ENCODE measurements at regions of chr2 and their contacts with region 1.

Region 1: GRCh38 chr2:171598713-171599319 is 76.5 kb downstream of the CYBRD1 start:
- DNase-seq: peak in 1 of 5 donors; percentile 22
- ATAC-seq: peak; percentile 54 to 84 (median 66)
- H3K4me3 ChIP-seq: no peak overlapping the region
- H3K27ac ChIP-seq: no peak overlapping the region
- H3K4me1 ChIP-seq: peaks cover 0 to 3% (median 0%) of the 10 kb centered on the region in 12 donors
- H3K27me3 ChIP-seq: peaks cover 0 to 24% (median 0%) of the 10 kb centered on the region in 9 donors
- CTCF ChIP-seq: peak; percentile 60 to 83 (median 72)
- POLR2A ChIP-seq: no peak

Region 2: DNA sequence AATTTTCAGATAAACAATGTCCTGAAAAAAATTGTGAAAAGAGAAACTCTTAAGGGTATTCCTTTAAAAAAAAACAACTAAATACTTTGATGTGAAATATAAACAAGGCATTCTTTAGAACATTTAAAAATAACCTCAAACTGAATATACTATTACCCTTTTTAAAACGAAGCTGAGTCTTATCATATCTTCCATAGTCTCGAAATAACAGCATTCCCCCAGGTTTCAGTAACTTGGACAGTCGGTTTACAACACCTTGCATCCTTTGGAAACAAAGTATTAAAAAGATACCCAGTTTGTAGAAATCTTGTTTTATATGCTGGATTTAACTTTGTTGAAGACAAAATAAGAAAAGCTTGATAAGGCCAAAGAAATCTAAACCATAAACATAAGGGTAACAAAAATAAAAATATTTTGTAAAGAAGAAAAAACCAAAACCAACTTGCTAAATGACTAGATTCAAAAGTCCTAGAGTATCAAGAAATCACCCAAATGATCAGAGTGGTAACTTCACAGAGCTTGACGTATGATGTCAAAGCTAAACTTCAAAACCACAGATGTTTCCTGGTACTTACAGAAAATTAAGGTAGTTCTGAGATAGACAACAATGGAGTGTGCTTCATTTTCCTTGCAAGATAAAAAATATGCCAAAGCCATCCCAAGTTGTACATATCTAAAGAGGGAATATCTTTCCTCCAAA is 272.8 kb before region 1 on chr2:
- intact Hi-C with region 1: no loop called
- DNase-seq: no peak
- ATAC-seq: no peak
- H3K4me3 ChIP-seq: no peak overlapping the region
- H3K27ac ChIP-seq: peak overlapping the region in 1 of 12 donors; percentile 32
- H3K4me1 ChIP-seq: peaks cover 0 to 3% (median 0%) of the 10 kb centered on the region in 12 donors
- H3K27me3 ChIP-seq: no peaks in the 10 kb centered on the region
- CTCF ChIP-seq: no peak
- POLR2A ChIP-seq: no peak

Region 3: DNA sequence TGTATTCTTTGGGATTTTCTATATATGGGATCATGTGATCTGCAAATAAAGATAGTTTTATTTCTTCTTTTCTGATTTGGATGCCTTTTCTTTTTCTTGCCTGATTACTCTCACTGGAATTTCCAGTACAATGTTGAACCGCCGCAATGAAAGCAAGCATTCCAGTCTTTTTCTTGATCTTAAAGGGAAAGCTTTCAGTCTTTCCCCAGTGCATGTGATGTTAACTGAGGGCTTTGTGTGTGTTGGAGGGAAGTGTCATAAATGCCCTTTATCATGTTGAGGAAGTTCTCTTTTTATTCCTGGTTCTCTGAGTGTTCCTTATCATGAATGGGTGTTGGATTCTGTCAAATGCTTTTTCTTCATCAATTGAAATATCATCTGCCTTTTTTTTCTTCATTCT is 93.4 kb before region 1 on chr2:
- intact Hi-C with region 1: no loop called
- DNase-seq: no peak
- ATAC-seq: no peak
- H3K4me3 ChIP-seq: no peak overlapping the region
- H3K27ac ChIP-seq: no peak overlapping the region
- H3K4me1 ChIP-seq: no peaks in the 10 kb centered on the region
- H3K27me3 ChIP-seq: no peaks in the 10 kb centered on the region
- CTCF ChIP-seq: no peak
- POLR2A ChIP-seq: no peak

Region 4: GRCh38 chr2:171723724-171724683 is 125.2 kb after region 1 on chr2:
- intact Hi-C with region 1: no loop called
- DNase-seq: no peak
- ATAC-seq: no peak
- H3K4me3 ChIP-seq: no peak overlapping the region
- H3K27ac ChIP-seq: no peak overlapping the region
- H3K4me1 ChIP-seq: no peaks in the 10 kb centered on the region
- H3K27me3 ChIP-seq: no peaks in the 10 kb centered on the region
- CTCF ChIP-seq: no peak
- POLR2A ChIP-seq: no peak

Region 5: GRCh38 chr2:172131713-172132555 is 533.1 kb after region 1 on chr2:
- intact Hi-C with region 1: loop called in 2 of 10 experiments (anchors 10 kb)
- DNase-seq: no peak
- ATAC-seq: no peak
- H3K4me3 ChIP-seq: no peak overlapping the region
- H3K27ac ChIP-seq: no peak overlapping the region
- H3K4me1 ChIP-seq: no peaks in the 10 kb centered on the region
- H3K27me3 ChIP-seq: peaks cover 0 to 11% (median 0%) of the 10 kb centered on the region in 9 donors
- CTCF ChIP-seq: no peak
- POLR2A ChIP-seq: no peak

Measured in heart left ventricle (tissue), 16 donors.